SK-N-SH (cell line): ENCODE measurements at regions of chr1 and their contacts with region 1.

Region 1: DNA sequence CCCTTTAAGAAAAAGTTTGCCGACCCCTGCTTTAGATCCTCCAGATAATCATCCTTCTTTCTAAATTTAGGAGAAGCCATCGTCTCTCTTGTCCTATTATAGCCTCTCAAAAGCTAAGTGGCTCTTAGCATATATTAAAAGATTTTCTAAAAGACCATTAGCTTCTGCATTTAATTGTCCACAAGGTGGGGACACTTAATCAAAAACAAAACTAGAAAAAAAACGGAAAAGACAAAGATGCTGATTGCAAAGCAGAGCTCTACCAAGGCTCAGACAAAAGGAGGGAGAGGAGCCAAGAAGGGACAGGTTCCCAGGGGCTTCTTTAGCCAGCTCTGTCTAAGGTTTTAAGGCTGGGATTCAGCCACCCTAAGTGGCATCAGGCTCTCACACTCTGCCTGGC is 128.3 kb upstream of the HMGB4 start:
- DNase-seq: peak; percentile 54
- H3K4me3 ChIP-seq: no peak overlapping the region
- H3K27ac ChIP-seq: no peak overlapping the region
- H3K4me1 ChIP-seq: no peaks in the 10 kb centered on the region; a peak in 1 of 4 replicates
- H3K27me3 ChIP-seq: no peaks in the 10 kb centered on the region
- CTCF ChIP-seq: no peak
- EP300 ChIP-seq: no peak
- RAD21 ChIP-seq: peak; percentile 78

Region 2: GRCh38 chr1:33714421-33714820 is 21.2 kb before region 1 on chr1:
- CTCF ChIA-PET with region 1: no interaction called
- POLR2A ChIA-PET with region 1: no interaction called
- DNase-seq: no peak
- H3K4me3 ChIP-seq: no peak overlapping the region
- H3K27ac ChIP-seq: no peak overlapping the region
- H3K4me1 ChIP-seq: peaks cover 0 to 5% of the 10 kb centered on the region in 2 experiments; a peak in 1 of 4 replicates
- H3K27me3 ChIP-seq: no peaks in the 10 kb centered on the region
- CTCF ChIP-seq: no peak
- EP300 ChIP-seq: no peak
- RAD21 ChIP-seq: no peak

Region 3: GRCh38 chr1:33745942-33746341 is 10.3 kb after region 1 on chr1:
- CTCF ChIA-PET with region 1: interaction called, 12 read pairs
- POLR2A ChIA-PET with region 1: no interaction called
- DNase-seq: no peak
- H3K4me3 ChIP-seq: no peak overlapping the region
- H3K27ac ChIP-seq: no peak overlapping the region
- H3K4me1 ChIP-seq: no peaks in the 10 kb centered on the region; a peak in 1 of 4 replicates
- H3K27me3 ChIP-seq: no peaks in the 10 kb centered on the region
- CTCF ChIP-seq: no peak
- EP300 ChIP-seq: no peak
- RAD21 ChIP-seq: no peak